ENCODE measurements at regions of chr11 and their contacts with region 1.

Region 1: DNA sequence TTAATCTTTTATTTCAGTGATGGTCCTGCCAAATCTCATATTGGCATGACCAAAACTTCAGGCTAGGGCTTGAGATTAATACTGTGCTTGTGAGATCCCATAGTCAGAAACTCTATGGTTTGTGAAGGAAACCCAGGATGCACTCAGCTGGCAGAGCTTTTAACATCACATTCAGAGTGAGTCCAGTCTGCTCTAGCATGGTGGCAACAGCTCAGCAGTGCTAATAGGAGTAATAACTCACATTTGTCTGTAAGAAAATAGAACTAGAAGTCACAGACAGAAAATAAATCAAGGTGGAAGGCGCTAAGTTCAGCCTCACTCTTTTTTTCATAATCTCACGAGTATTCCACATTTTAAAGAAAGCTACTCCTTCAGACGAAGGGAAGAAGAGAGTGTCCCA is 549.3 kb upstream of the TENM4 start:
- DNase-seq: no peak
- H3K4me3 ChIP-seq: no peak overlapping the region
- H3K27ac ChIP-seq: no peak overlapping the region
- H3K4me1 ChIP-seq: no peaks in the 10 kb centered on the region
- H3K27me3 ChIP-seq: no peaks in the 10 kb centered on the region
- CTCF ChIP-seq: no peak

Region 2: DNA sequence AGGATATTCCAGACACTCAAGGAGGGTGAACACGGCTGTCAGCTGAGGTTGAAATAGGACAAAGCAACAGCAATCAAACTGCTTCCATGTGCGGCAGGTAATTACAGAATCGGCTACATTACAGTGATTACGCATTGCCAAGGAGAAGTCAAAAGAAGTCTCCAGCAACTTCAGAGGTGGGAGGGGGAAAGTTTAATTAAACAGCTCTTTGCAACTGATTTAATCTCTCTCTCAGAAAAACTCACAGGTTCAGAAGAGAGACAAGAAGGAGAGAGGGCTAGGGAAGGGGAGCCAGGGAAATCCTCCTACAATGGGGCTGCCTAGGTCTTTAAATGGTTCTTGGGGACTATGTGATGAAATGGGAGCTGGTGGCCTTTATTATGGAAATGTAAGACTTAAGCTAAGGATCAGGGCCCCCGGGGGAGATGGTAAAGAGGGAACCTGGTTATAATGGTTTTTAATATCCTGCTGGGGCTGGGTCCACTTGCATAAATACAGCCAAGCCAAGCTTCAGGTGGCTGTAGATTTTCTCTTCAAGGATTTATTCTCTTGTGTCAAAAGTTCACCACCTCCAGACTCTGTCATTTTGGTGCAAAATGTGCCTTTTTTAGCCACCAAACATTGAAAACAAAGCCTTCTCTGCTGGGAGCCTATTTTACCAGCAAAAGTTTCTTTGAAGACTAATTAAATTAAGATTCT is 1060.8 kb before region 1 on chr11:
- CTCF ChIA-PET with region 1: no interaction called
- POLR2A ChIA-PET with region 1: no interaction called
- intact Hi-C with region 1: no loop called
- DNase-seq: peak; percentile 21
- H3K4me3 ChIP-seq: no peak overlapping the region
- H3K27ac ChIP-seq: no peak overlapping the region
- H3K4me1 ChIP-seq: no peaks in the 10 kb centered on the region
- H3K27me3 ChIP-seq: peaks cover 30% of the 10 kb centered on the region
- CTCF ChIP-seq: no peak

Region 3: GRCh38 chr11:79963856-79964645 is 26.1 kb before region 1 on chr11:
- CTCF ChIA-PET with region 1: no interaction called
- POLR2A ChIA-PET with region 1: no interaction called
- intact Hi-C with region 1: loop called (anchors 1 kb)
- DNase-seq: no peak
- H3K4me3 ChIP-seq: no peak overlapping the region
- H3K27ac ChIP-seq: no peak overlapping the region
- H3K4me1 ChIP-seq: no peaks in the 10 kb centered on the region
- H3K27me3 ChIP-seq: no peaks in the 10 kb centered on the region
- CTCF ChIP-seq: no peak

Region 4: DNA sequence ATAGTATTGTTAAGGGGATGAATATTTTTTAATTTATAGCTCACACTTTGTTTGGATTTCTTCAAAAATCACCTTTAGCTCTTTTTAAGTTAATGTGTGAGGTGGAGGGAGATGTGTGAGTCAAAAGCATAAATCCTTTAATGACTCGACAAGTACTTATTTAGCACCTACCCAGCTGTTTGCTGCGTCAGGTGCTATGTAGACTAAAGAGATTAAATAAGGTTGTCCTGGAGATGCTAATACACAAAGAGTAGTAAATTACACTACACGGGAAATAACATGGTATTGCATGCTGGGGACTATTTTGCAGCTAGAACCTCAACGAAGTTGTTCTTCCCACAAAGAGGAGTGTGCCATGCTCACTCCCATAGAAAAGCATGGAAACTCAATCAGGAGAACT is 34.0 kb after region 1 on chr11:
- CTCF ChIA-PET with region 1: no interaction called
- POLR2A ChIA-PET with region 1: no interaction called
- intact Hi-C with region 1: no loop called
- DNase-seq: no peak
- H3K4me3 ChIP-seq: no peak overlapping the region
- H3K27ac ChIP-seq: no peak overlapping the region
- H3K4me1 ChIP-seq: no peaks in the 10 kb centered on the region
- H3K27me3 ChIP-seq: no peaks in the 10 kb centered on the region
- CTCF ChIP-seq: no peak

Measured in A673 (cell line).